IMR-90 (cell line): ENCODE measurements at regions of chr9 and their contacts with region 1.

Region 1: GRCh38 chr9:123544007-123544827 is 188.2 kb downstream of the CRB2 start:
- DNase-seq: peak; percentile 54
- ATAC-seq: peak; percentile 73; the same call in 1 of the 2 replicates
- H3K4me3 ChIP-seq: no peak overlapping the region
- H3K27ac ChIP-seq: no peak overlapping the region
- H3K4me1 ChIP-seq: no peaks in the 10 kb centered on the region
- H3K27me3 ChIP-seq: peaks cover 2% of the 10 kb centered on the region; the same call in 1 of the 2 replicates
- CTCF ChIP-seq: peak; percentile 95
- POLR2A ChIP-seq: peak; percentile 48; the same call in 1 of the 2 replicates
- RAD21 ChIP-seq: peak; percentile 95

Region 2: GRCh38 chr9:123401879-123402513 is 142.2 kb before region 1 on chr9:
- CTCF ChIA-PET with region 1: no interaction called
- POLR2A ChIA-PET with region 1: no interaction called
- dilution Hi-C with region 1: no loop called
- in situ Hi-C with region 1: no loop called
- intact Hi-C with region 1: loop called (anchors 2 kb)
- DNase-seq: peak; percentile 57
- ATAC-seq: peak; percentile 96
- H3K4me3 ChIP-seq: no peak overlapping the region
- H3K27ac ChIP-seq: no peak overlapping the region
- H3K4me1 ChIP-seq: no peaks in the 10 kb centered on the region; the same call in 1 of the 2 replicates
- H3K27me3 ChIP-seq: no peaks in the 10 kb centered on the region
- CTCF ChIP-seq: peak; percentile 86
- POLR2A ChIP-seq: no peak
- RAD21 ChIP-seq: peak; percentile 84

Region 3: DNA sequence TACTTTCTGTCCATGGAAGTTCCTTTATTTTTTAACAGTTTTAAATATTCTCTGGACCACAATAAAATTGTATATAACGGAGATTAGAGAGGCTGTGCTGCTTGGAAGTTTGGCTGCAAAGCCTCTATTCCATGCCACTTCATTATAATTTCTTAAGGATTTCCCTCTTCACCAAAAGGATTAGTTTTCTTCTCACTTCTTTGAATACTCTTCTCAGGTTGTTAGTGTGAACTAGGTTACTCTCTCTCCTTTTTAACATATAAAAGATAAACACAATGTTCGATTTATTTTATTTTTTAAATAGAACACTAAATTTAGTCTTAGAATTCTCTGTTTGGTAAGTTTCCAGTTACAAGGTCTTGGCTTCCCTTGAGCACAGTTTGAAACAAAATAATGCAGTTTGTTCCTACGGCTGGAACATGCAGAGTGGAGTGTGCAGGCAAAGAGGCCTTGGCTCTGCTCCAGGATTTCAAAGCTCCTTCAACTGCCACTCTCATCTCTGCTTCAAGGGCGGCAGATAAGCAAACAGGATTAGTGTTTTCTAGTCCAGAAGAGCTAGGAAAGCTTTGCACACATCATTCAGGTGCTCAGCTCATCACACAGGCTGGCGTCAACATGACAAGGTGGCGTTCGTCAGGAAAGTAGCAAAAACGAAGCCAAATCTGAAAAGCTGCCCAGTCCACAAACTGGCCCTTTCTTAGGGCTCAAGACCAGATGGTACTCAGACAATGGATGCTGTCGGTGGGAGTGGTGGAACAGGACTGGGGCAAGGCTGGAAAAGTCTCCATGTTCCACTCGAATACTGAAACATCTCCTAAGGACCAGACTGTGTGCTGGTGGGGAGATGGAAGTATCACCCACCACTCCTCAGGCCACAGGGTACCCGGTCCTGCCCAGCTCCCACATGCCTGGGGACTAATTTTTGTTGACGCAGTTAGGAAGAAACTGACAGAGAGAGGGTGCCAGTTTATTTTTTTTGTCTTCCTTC is 98.4 kb after region 1 on chr9:
- CTCF ChIA-PET with region 1: no interaction called
- POLR2A ChIA-PET with region 1: no interaction called
- dilution Hi-C with region 1: no loop called
- in situ Hi-C with region 1: no loop called
- intact Hi-C with region 1: no loop called
- DNase-seq: peak; percentile 18
- ATAC-seq: no peak
- H3K4me3 ChIP-seq: no peak overlapping the region
- H3K27ac ChIP-seq: no peak overlapping the region
- H3K4me1 ChIP-seq: no peaks in the 10 kb centered on the region; the same call in 1 of the 2 replicates
- H3K27me3 ChIP-seq: no peaks in the 10 kb centered on the region
- CTCF ChIP-seq: no peak
- POLR2A ChIP-seq: no peak
- RAD21 ChIP-seq: no peak

Region 4: DNA sequence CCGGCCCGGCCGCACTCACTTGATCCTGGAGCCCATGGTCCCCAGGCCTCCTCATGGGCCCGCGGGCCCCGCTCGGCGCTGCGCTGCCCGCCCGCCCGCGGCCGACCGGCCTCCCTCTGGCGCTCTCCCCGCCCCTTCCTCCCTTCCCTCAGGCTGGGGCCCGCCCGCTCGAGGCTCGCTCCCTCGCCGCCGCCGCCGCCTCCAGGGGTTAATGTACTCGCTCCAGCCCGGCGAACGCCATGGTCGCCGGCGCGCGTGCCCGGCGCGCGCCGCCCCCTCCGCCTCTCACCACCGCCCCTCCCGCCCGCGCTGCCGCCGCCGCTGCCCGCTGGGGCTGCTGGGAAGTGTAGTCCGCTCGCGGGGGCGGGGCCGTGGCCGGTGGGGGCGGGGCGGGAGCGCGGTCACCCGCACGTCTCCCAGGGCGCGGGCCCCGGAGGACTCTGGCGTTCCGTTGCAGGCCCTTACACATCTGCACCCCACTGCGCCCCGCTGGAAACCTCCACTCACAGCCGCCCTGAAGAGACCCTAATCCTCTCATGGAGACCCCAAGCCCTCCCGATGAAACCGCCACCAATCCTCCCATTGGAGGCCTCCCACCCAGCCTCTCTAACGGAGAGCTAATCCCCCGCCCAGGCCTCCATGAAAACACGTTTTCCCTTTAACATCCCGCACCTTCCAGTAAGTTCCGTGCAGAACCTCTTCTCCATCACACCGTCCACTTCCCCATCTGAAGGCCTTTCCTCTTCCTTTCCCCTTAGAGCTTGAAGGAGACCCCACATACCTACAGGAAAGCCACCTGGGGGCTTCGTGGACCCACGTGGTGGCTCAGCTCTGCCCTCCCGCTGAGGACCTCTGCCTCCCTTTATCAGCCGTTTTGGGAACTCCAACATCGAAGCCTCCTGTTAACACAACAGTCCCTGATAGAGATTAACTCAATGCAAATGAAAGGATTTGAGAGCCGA is 385.9 kb after region 1 on chr9 and contains the start of gene DENND1A:
- CTCF ChIA-PET with region 1: no interaction called
- POLR2A ChIA-PET with region 1: no interaction called
- dilution Hi-C with region 1: no loop called
- in situ Hi-C with region 1: no loop called
- intact Hi-C with region 1: loop called (anchors 10 kb)
- DNase-seq: peak; percentile 84
- ATAC-seq: peak; percentile 96
- H3K4me3 ChIP-seq: peak within 1 kb of the TSS; percentile 46
- H3K27ac ChIP-seq: peak within 1 kb of the TSS; percentile 17; the same call in 1 of the 2 replicates
- H3K4me1 ChIP-seq: peaks cover 8% of the 10 kb centered on the region
- H3K27me3 ChIP-seq: no peaks in the 10 kb centered on the region
- CTCF ChIP-seq: no peak
- POLR2A ChIP-seq: peak; percentile 44; the same call in 1 of the 2 replicates
- RAD21 ChIP-seq: no peak
- total RNA-seq, gene DENND1A: 21.4 and 27.6 TPM in 2 replicates

Region 5: GRCh38 chr9:124040935-124041816 is 497.0 kb after region 1 on chr9:
- CTCF ChIA-PET with region 1: interaction called, 3 read pairs
- POLR2A ChIA-PET with region 1: no interaction called
- dilution Hi-C with region 1: no loop called
- in situ Hi-C with region 1: loop called (anchors 10 kb)
- intact Hi-C with region 1: loop called (anchors 1 kb)
- DNase-seq: no peak
- ATAC-seq: peak; percentile 60
- H3K4me3 ChIP-seq: peak overlapping the region; percentile 17; the same call in 1 of the 2 replicates
- H3K27ac ChIP-seq: no peak overlapping the region
- H3K4me1 ChIP-seq: no peaks in the 10 kb centered on the region; the same call in 1 of the 2 replicates
- H3K27me3 ChIP-seq: peaks cover 80% of the 10 kb centered on the region
- CTCF ChIP-seq: peak; percentile 78
- POLR2A ChIP-seq: no peak
- RAD21 ChIP-seq: peak; percentile 72

Region 6: DNA sequence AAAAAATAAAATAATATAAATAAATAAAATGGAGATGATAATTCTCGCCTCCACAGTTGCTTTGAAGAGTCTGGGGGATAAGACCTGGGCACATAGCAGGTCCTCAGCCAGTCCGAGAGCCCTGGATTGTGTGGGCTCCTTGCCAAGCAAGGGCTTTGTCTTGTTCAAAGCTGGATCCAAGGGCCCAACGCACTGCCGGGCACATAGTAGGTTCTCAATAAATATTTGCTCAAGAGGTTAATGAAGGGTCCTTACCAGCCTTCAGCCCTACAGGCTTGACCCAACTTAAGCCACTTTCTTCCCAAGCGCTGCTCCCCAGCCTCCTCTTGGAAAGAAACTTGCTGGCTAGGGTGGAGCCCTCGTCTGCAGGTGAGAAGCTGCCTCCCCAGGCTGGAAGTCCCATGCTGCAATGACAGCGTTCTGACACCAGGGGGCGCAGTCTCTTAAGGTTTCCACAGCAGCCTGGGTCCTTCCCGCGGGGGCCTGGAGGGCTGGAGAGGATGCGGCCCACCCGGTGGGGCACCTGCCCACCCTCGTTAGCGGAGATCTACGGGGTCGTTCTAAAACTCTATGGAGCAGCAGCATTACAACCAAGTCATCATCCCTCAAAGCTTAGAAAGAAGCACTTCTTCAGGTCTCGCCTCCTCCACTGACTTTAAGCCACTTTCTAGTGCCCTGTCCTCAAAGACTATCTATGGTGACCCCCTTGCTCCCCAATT is 582.5 kb after region 1 on chr9:
- CTCF ChIA-PET with region 1: no interaction called
- POLR2A ChIA-PET with region 1: no interaction called
- dilution Hi-C with region 1: no loop called
- in situ Hi-C with region 1: no loop called
- intact Hi-C with region 1: loop called (anchors 5 kb)
- DNase-seq: peak; percentile 65
- ATAC-seq: peak; percentile 74
- H3K4me3 ChIP-seq: no peak overlapping the region
- H3K27ac ChIP-seq: no peak overlapping the region
- H3K4me1 ChIP-seq: peaks cover 4% of the 10 kb centered on the region; the same call in 1 of the 2 replicates
- H3K27me3 ChIP-seq: peaks cover 7% of the 10 kb centered on the region
- CTCF ChIP-seq: peak; percentile 84
- POLR2A ChIP-seq: no peak
- RAD21 ChIP-seq: peak; percentile 92

Region 7: GRCh38 chr9:124320062-124320973 is 776.1 kb after region 1 on chr9:
- CTCF ChIA-PET with region 1: no interaction called
- POLR2A ChIA-PET with region 1: no interaction called
- dilution Hi-C with region 1: no loop called
- in situ Hi-C with region 1: loop called (anchors 25 kb)
- intact Hi-C with region 1: no loop called
- DNase-seq: peak; percentile 60
- ATAC-seq: peak; percentile 96
- H3K4me3 ChIP-seq: no peak overlapping the region
- H3K27ac ChIP-seq: peak overlapping the region; percentile 36
- H3K4me1 ChIP-seq: peaks cover 6% of the 10 kb centered on the region; the same call in 1 of the 2 replicates
- H3K27me3 ChIP-seq: no peaks in the 10 kb centered on the region
- CTCF ChIP-seq: peak; percentile 83
- POLR2A ChIP-seq: no peak
- RAD21 ChIP-seq: peak; percentile 82